H1 (cell line): ENCODE measurements at regions of chr17 and their contacts with region 1.

Region 1: DNA sequence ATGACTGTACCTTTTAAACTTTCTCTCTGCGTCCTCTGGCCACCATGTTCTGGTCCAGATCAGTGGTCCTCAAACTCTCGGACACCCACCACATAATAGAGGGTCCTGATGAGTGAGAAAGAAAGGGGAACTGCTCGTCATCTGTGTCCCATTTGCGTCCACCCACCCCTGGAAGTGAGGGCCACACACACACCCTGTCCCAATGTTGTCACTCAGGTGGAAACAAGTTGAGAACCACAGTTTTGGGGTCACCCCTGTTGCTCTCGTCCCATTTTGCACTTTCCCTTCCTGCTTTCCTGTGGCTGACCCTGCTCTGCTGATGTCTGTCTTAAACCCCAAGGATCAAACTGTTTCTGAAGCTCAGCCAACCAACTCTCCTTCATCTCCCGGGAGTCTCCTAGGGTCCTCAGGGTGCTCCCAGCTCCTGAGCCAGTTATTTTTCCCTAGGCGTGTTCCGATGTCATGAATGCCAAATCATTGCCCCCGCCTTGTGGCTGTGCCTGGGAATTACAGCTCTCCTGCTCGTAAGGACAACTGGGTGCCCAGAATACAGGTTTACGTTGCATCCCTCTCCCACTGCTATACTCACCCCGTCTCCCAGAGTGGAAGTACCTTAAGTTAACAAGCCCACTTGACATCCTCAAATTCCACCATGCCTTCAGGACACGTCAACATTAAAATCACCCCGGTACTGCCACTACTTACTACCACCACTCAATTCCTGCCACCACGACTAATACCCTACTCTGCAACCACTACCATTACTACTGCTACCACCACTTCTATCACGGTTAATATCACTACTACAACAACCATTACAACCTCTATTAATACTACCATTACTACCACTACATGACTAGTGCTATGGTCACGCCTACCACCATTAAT is 26.0 kb upstream of the HNF1B start:
- DNase-seq: peak in 1 of 2 experiments; percentile 86
- H3K4me3 ChIP-seq: no peak overlapping the region
- H3K27ac ChIP-seq: no peak overlapping the region
- H3K4me1 ChIP-seq: no peaks in the 10 kb centered on the region
- H3K27me3 ChIP-seq: no peaks in the 10 kb centered on the region; a peak in 2 of 7 replicates
- CTCF ChIP-seq: peak; percentile 85 to 86 (median 86)
- EP300 ChIP-seq: no peak
- POLR2A ChIP-seq: no peak
- RAD21 ChIP-seq: peak; percentile 87

Region 2: DNA sequence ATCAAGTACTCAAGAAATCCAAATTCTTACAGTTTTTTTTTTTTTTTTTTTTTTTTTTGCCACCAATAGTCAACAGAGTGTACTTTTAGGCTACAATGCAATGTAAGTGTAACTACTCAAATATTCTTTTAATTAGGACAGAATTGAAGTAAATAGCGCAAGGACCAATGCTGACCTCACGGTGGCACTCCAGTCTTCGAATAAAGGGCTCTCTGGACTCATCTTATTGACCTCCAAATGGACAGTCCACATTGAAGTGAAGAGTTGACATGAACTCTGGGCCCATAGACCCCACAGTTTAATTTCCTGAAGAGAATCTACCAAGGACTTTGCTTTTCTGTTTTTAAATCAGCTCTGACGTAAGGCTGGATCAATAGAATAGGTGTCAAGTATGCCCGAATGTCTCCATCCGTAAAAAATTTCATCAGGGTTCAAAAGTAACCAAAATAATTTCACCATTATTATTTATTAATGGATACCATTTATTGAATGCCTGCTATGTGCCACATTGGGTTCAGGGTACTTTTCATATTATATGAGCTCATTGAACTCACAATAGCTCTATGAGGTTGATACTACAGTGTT is 120.4 kb before region 1 on chr17:
- CTCF ChIA-PET with region 1: interaction called, 48 read pairs
- POLR2A ChIA-PET with region 1: no interaction called
- DNase-seq: no peak
- H3K4me3 ChIP-seq: no peak overlapping the region
- H3K27ac ChIP-seq: no peak overlapping the region
- H3K4me1 ChIP-seq: no peaks in the 10 kb centered on the region
- H3K27me3 ChIP-seq: no peaks in the 10 kb centered on the region; a peak in 3 of 7 replicates
- CTCF ChIP-seq: peak; percentile 20 to 73 (median 68)
- EP300 ChIP-seq: no peak
- POLR2A ChIP-seq: no peak
- RAD21 ChIP-seq: peak; percentile 80 to 87

Region 3: DNA sequence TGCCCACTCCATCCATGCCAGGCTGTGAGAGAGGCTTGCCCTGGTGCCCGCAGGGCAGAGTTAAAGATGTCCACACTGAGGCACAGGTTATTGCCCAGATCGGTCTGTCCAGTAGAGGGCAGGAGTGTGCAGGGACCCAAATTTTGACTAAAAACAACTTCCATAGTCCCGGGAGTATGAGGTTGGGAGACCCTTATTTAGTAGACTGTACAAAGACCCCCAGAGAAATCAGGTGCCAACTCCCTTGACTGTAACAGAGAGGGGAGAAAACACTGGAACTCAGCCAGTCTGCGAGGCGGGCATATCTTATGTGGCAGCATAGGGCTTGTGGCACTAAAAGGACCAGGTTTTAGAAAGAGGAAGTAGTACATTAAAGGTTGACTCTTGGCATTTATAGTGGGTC is 69.4 kb before region 1 on chr17:
- CTCF ChIA-PET with region 1: interaction called, 28 read pairs
- POLR2A ChIA-PET with region 1: no interaction called
- DNase-seq: peak in 1 of 2 experiments; percentile 85
- H3K4me3 ChIP-seq: no peak overlapping the region
- H3K27ac ChIP-seq: no peak overlapping the region
- H3K4me1 ChIP-seq: no peaks in the 10 kb centered on the region
- H3K27me3 ChIP-seq: no peaks in the 10 kb centered on the region
- CTCF ChIP-seq: peak; percentile 77 to 84 (median 78)
- EP300 ChIP-seq: no peak
- POLR2A ChIP-seq: no peak
- RAD21 ChIP-seq: peak; percentile 71 to 77

Region 4: GRCh38 chr17:37744961-37745800 is 25.7 kb before region 1 on chr17 and contains the start of gene HNF1B:
- CTCF ChIA-PET with region 1: interaction called, 17 read pairs
- POLR2A ChIA-PET with region 1: no interaction called
- DNase-seq: peak in 1 of 2 experiments; percentile 65
- H3K4me3 ChIP-seq: peak within 1 kb of the TSS; percentile 39 to 69 (median 48); a peak in 7 of 8 replicates
- H3K27ac ChIP-seq: no peak within 1 kb of the TSS
- H3K4me1 ChIP-seq: peaks cover 0 to 21% (median 15%) of the 10 kb centered on the region in 4 experiments; a peak in 5 of 7 replicates
- H3K27me3 ChIP-seq: peaks cover 60 to 86% (median 77%) of the 10 kb centered on the region in 4 experiments
- CTCF ChIP-seq: no peak
- EP300 ChIP-seq: no peak
- POLR2A ChIP-seq: no peak
- RAD21 ChIP-seq: no peak
- total RNA-seq, gene HNF1B: 0.13 TPM in 1 of 2 replicates, not detected in the other

Region 5: GRCh38 chr17:37759014-37759637 is 11.7 kb before region 1 on chr17:
- CTCF ChIA-PET with region 1: interaction called, 11 read pairs
- POLR2A ChIA-PET with region 1: no interaction called
- DNase-seq: no peak
- H3K4me3 ChIP-seq: no peak overlapping the region
- H3K27ac ChIP-seq: no peak overlapping the region
- H3K4me1 ChIP-seq: no peaks in the 10 kb centered on the region
- H3K27me3 ChIP-seq: peaks cover 0 to 3% (median 0%) of the 10 kb centered on the region in 4 experiments; a peak in 1 of 7 replicates
- CTCF ChIP-seq: no peak
- EP300 ChIP-seq: no peak
- POLR2A ChIP-seq: no peak
- RAD21 ChIP-seq: no peak

Region 6: GRCh38 chr17:37791447-37792399 is 20.8 kb after region 1 on chr17:
- CTCF ChIA-PET with region 1: interaction called, 13 read pairs
- POLR2A ChIA-PET with region 1: no interaction called
- DNase-seq: no peak
- H3K4me3 ChIP-seq: no peak overlapping the region
- H3K27ac ChIP-seq: no peak overlapping the region
- H3K4me1 ChIP-seq: no peaks in the 10 kb centered on the region
- H3K27me3 ChIP-seq: no peaks in the 10 kb centered on the region
- CTCF ChIP-seq: peak in 2 of 3 experiments; percentile 40 to 62; a peak in 3 of 4 replicates
- EP300 ChIP-seq: no peak
- POLR2A ChIP-seq: no peak
- RAD21 ChIP-seq: peak; percentile 60 to 63